HAP-1 (cell line): ENCODE measurements at regions of chr11 and their contacts with region 1.

Region 1: GRCh38 chr11:62245271-62245753 is 3.3 kb downstream of the SCGB1D2 start:
- DNase-seq: peak; percentile 5 to 65
- H3K4me3 ChIP-seq: no peak overlapping the region
- H3K4me1 ChIP-seq: no peaks in the 10 kb centered on the region
- H3K27me3 ChIP-seq: no peaks in the 10 kb centered on the region; the same call in 1 of the 2 replicates

Region 2: GRCh38 chr11:62193952-62194351 is 51.4 kb before region 1 on chr11:
- in situ Hi-C with region 1: no loop called
- DNase-seq: peak in 1 of 2 experiments; percentile 58
- H3K4me3 ChIP-seq: no peak overlapping the region
- H3K4me1 ChIP-seq: peaks cover 10% of the 10 kb centered on the region
- H3K27me3 ChIP-seq: no peaks in the 10 kb centered on the region

Region 3: GRCh38 chr11:62370743-62371440 is 125.6 kb after region 1 on chr11:
- in situ Hi-C with region 1: loop called (anchors 10 kb)
- DNase-seq: no peak
- H3K4me3 ChIP-seq: no peak overlapping the region
- H3K4me1 ChIP-seq: no peaks in the 10 kb centered on the region
- H3K27me3 ChIP-seq: no peaks in the 10 kb centered on the region